Left cardiac atrium (tissue), 4 donors: ENCODE measurements at regions of chr2 and their contacts with region 1.

Region 1: DNA sequence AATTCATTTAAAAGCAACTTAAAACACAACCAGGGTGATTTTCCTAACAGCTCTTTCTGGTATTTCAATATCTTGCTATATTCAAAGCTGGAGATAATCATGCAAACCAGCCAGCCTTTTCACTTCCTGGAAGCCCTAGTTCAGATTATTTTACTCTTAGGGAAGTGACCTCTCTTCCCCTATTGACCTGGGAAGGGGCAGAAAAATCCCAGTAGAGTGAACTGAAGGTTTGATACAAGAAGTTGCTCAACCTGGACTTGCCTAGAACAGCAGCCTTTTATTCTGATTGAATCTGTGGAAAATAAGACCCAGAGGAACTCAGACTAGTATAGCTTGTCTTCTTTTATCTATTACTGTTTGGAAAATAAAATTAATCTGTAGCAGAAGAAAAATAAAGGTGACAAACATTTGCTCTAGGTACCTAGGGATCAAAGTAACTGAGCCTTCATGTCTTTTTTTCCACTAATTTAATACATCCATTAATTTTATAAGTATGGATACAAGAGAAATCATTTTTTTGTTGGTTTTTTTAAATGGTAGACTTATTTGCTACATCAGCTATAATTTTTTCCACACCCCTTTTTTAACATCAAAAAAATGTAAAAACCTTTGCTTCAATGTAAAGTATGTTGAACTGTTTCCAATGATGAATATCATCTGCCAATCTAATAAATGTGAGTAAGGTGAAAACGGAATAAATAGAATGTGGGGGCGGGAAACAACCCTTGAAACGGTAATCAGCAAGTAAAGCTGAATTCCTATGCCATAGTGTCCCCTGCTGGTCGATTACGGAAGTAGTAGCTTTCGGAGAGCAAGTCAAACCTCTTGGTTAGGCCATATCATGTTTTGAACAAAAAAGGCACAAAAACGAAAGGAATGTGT is 629.9 kb downstream of the NRXN1 start:
- DNase-seq: peak; percentile 22
- ATAC-seq: peak in 1 of 2 donors; percentile 23

Region 2: DNA sequence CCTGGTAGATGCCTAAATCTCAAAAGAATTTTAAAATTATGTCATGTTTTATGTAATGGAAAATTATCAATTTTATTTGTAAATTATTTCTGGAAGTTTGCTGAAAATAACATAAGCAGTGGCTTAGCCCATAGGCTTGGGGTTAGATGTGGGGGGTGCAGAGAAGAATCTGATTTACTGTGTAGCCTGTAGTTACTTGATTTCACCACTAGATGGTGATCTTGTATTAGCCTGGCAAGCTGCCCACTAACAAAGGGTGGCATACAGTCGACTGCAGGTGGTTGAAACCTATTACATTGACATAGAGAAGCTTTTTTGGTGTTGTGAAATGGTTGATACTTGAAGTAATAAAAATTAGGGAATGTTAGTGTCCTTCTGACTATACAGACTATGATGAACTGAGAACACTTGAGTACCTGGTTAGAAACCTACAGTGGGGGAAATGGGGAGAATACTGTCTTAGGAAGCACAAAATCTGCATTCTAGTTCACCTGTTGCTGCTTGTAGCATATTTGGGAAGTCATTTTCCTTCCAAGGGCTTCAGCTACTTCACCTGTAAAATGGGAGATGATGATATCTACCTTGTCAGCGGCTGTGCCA is 1455.5 kb before region 1 on chr2:
- intact Hi-C with region 1: loop called in 1 of 2 experiments (anchors 5 kb)
- DNase-seq: peak; percentile 31
- ATAC-seq: peak; percentile 74

Region 3: GRCh38 chr2:49616800-49617199 is 785.2 kb before region 1 on chr2:
- intact Hi-C with region 1: loop called in 1 of 2 experiments (anchors 5 kb)
- DNase-seq: no peak
- ATAC-seq: peak in 1 of 2 donors; percentile 58

Region 4: DNA sequence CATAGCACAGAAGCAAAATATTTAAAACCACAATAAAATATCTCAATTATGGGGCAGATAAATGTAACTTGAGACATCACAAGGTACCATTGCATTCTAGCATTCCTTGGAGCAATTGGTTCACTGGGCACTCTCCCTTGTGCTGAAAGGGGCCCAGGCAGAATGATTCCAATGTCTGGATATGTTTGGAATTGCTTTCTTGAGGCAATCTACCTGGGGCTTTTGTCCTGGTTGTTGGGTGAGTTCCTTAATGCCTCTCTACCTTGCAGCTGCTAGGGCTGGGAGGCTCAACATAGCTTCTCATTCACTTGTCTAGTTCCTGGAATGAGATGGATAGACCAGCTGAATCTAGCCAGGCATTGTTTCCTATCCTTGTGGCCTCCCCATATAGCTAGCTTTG is 708.1 kb before region 1 on chr2:
- intact Hi-C with region 1: loop called in 1 of 2 experiments (anchors 10 kb)
- DNase-seq: no peak
- ATAC-seq: no peak

Region 5: GRCh38 chr2:50564766-50565165 is 162.8 kb after region 1 on chr2:
- intact Hi-C with region 1: no loop called
- DNase-seq: no peak
- ATAC-seq: no peak